OCI-LY7 (cell line): ENCODE measurements at regions of chr16 and their contacts with region 1.

Region 1: DNA sequence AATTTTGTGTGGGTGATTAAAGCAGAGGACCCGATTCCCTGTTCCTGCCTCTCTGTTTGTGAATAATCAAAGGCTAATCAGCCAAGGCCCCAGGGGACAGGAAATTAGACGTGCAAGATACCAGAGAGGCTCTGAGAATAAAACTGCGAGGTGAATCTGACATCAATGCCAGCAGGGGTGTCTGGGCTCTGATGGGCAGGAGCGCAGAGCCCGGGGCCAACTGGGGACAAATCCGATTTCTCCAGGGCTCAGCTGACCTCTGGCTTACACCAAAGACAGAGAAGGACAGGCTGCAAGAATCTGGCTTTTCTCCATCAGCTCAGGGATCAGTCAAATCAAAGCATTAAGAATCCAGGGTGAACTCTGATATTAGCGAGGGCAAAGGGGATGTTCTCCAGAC is 174.3 kb downstream of the XYLT1 start:
- DNase-seq: no peak
- H3K4me3 ChIP-seq: no peak overlapping the region
- H3K27ac ChIP-seq: peak overlapping the region; percentile 27
- H3K4me1 ChIP-seq: peaks cover 72% of the 10 kb centered on the region
- CTCF ChIP-seq: no peak

Region 2: DNA sequence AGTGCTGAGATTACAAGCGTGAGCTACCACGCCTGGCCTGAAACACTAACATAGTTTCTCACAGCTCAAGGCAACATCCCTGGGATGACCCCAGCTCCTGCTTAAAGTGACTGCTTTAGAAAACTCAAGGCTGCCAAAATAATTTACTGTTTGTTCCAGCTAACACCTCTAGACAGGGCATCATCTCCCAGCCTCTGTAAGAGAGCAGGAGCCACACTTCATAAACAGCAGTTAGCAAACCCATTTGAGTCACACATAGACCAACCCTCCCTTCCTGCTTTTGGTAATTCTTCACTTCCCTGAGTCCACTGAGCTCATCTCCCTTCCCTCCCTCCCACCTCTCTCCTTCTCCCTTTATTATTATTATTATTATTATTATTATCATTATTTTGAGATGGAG is 27.0 kb before region 1 on chr16:
- CTCF ChIA-PET with region 1: no interaction called
- POLR2A ChIA-PET with region 1: no interaction called
- intact Hi-C with region 1: no loop called
- DNase-seq: no peak
- H3K4me3 ChIP-seq: no peak overlapping the region
- H3K27ac ChIP-seq: no peak overlapping the region
- H3K4me1 ChIP-seq: peaks cover 8% of the 10 kb centered on the region
- CTCF ChIP-seq: no peak

Region 3: GRCh38 chr16:18932243-18932981 is 1636.0 kb after region 1 on chr16:
- CTCF ChIA-PET with region 1: no interaction called
- POLR2A ChIA-PET with region 1: no interaction called
- intact Hi-C with region 1: loop called (anchors 10 kb)
- DNase-seq: no peak
- H3K4me3 ChIP-seq: no peak overlapping the region
- H3K27ac ChIP-seq: no peak overlapping the region
- H3K4me1 ChIP-seq: peaks cover 24% of the 10 kb centered on the region
- CTCF ChIP-seq: no peak